Mammary epithelial cell (primary cell): ENCODE measurements at regions of chr4 and their contacts with region 1.

Region 1: DNA sequence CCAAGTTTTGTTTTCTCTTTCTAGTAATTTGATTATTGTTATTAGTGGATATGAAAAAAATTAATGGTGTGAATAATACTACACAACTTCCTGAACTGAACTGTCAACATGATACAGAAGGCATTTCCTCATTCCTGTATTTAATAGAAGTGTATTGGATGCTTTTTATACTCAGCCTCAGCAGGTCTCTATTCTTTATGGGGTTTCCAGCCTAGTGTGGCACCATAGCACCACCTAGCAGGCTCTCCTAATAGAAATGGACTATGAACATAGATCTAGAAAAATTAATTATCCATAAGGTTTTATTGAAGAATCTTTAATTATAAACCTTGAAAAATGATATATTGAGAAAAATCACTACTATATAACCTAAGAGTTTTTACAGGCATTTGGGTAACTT is 52.4 kb downstream of the GLRB start:
- DNase-seq: peak; percentile 36
- H3K4me3 ChIP-seq: no peak overlapping the region
- H3K27ac ChIP-seq: no peak overlapping the region
- H3K4me1 ChIP-seq: no peaks in the 10 kb centered on the region
- H3K27me3 ChIP-seq: no peaks in the 10 kb centered on the region
- CTCF ChIP-seq: peak; percentile 39 to 68

Region 2: GRCh38 chr4:156169011-156169410 is 959.4 kb before region 1 on chr4:
- CTCF ChIA-PET with region 1: no interaction called
- dilution Hi-C with region 1: no loop called
- in situ Hi-C with region 1: no loop called
- intact Hi-C with region 1: loop called (anchors 2 kb)
- DNase-seq: peak; percentile 80
- H3K4me3 ChIP-seq: no peak overlapping the region
- H3K27ac ChIP-seq: no peak overlapping the region
- H3K4me1 ChIP-seq: peaks cover 7% of the 10 kb centered on the region
- H3K27me3 ChIP-seq: no peaks in the 10 kb centered on the region
- CTCF ChIP-seq: peak; percentile 63 to 67

Region 3: DNA sequence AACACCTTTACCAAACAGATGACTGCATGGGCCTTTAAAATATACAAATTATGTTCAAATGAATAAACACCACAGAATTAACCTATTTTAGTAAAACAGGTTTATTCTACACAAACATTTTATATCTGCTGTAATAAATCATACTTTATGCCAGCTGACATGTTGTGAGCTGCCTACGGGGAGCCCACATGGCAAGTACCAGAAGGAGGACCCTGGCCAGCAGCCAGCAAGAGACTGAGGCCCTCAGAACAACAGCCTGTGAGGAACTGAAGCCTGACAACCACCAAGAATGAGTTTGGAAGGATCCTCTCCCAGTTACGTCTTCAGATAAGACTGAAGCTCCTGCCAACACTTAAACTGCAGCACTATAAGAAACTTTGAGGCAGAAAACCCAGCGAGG is 533.8 kb before region 1 on chr4:
- CTCF ChIA-PET with region 1: no interaction called
- dilution Hi-C with region 1: no loop called
- in situ Hi-C with region 1: no loop called
- intact Hi-C with region 1: loop called (anchors 10 kb)
- DNase-seq: peak; percentile 24
- H3K4me3 ChIP-seq: no peak overlapping the region
- H3K27ac ChIP-seq: no peak overlapping the region
- H3K4me1 ChIP-seq: peaks cover 6% of the 10 kb centered on the region
- H3K27me3 ChIP-seq: no peaks in the 10 kb centered on the region
- CTCF ChIP-seq: no peak

Region 4: GRCh38 chr4:156954587-156954986 is 173.8 kb before region 1 on chr4:
- CTCF ChIA-PET with region 1: no interaction called
- dilution Hi-C with region 1: no loop called
- in situ Hi-C with region 1: no loop called
- intact Hi-C with region 1: no loop called
- DNase-seq: no peak
- H3K4me3 ChIP-seq: no peak overlapping the region
- H3K27ac ChIP-seq: no peak overlapping the region
- H3K4me1 ChIP-seq: peaks cover 34% of the 10 kb centered on the region
- H3K27me3 ChIP-seq: no peaks in the 10 kb centered on the region
- CTCF ChIP-seq: no peak

Region 5: DNA sequence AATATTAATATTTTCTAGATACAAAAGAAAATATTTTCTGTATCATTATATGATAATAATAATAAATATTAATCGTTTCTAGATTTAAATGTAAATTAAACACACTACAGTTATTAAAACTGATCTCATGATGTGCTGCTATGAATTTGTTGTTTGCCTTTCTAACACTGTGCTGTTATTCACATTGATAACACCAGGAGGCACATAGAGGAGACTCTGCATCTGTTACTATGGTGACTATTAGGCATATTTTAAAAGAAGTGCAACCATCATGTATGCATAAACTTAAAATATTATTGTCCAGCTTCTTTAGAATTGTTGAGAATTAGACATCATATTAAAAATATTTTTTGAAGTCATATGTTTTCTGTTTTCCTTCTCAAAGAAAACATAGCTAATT is 145.0 kb before region 1 on chr4:
- CTCF ChIA-PET with region 1: no interaction called
- dilution Hi-C with region 1: no loop called
- in situ Hi-C with region 1: no loop called
- intact Hi-C with region 1: loop called (anchors 1 kb)
- DNase-seq: no peak
- H3K4me3 ChIP-seq: no peak overlapping the region
- H3K27ac ChIP-seq: no peak overlapping the region
- H3K4me1 ChIP-seq: no peaks in the 10 kb centered on the region
- H3K27me3 ChIP-seq: no peaks in the 10 kb centered on the region
- CTCF ChIP-seq: peak; percentile 53 to 60

Region 6: GRCh38 chr4:157045507-157046127 is 82.8 kb before region 1 on chr4:
- CTCF ChIA-PET with region 1: no interaction called
- dilution Hi-C with region 1: no loop called
- in situ Hi-C with region 1: no loop called
- intact Hi-C with region 1: loop called (anchors 1 kb)
- DNase-seq: peak; percentile 66
- H3K4me3 ChIP-seq: no peak overlapping the region
- H3K27ac ChIP-seq: no peak overlapping the region
- H3K4me1 ChIP-seq: peaks cover 3% of the 10 kb centered on the region
- H3K27me3 ChIP-seq: no peaks in the 10 kb centered on the region
- CTCF ChIP-seq: peak; percentile 93

Region 7: GRCh38 chr4:157143369-157143768 is 15.0 kb after region 1 on chr4:
- CTCF ChIA-PET with region 1: no interaction called
- dilution Hi-C with region 1: no loop called
- in situ Hi-C with region 1: no loop called
- intact Hi-C with region 1: loop called (anchors 1 kb)
- DNase-seq: no peak
- H3K4me3 ChIP-seq: no peak overlapping the region
- H3K27ac ChIP-seq: no peak overlapping the region
- H3K4me1 ChIP-seq: no peaks in the 10 kb centered on the region
- H3K27me3 ChIP-seq: no peaks in the 10 kb centered on the region
- CTCF ChIP-seq: no peak

Region 8: DNA sequence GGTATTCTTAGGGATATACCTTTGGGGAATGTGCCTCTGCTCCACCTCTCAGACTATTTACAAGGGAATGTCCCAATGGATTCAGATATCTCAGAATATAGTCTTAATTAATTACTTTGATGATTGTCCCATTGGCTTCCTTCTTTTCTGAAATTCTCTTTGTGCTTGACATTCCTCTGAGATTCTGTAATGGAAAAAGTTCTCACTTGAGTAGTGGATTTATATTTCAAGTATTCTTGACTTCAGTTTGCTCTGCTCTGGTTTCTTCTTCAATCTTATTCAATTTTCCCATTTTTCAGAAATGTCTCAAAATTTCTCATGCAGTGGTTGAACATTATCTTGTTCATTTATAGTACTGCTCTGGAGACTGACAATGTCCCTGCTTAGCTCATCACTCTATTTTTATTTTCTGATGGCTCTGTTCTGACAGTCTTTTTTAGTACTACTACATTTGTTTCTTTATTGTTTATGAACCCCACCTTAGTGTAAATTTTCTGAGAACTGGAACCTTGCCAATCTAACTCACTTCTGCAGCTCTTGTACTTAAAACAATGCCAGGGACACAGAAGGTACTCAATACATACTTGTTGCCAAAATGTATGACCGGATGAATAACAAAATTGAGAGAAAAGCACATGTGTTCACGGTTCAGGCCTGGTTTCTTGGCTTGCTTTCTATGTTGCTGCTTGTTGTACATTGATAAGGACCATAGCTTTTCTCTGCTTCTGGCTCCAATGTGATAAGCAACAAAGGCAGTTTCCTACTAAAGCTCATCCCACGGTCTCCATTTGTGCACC is 572.7 kb after region 1 on chr4:
- CTCF ChIA-PET with region 1: no interaction called
- dilution Hi-C with region 1: no loop called
- in situ Hi-C with region 1: no loop called
- intact Hi-C with region 1: no loop called
- DNase-seq: no peak
- H3K4me3 ChIP-seq: no peak overlapping the region
- H3K27ac ChIP-seq: no peak overlapping the region
- H3K4me1 ChIP-seq: no peaks in the 10 kb centered on the region
- H3K27me3 ChIP-seq: no peaks in the 10 kb centered on the region
- CTCF ChIP-seq: no peak